Activated T-helper 2 cell treated with anti-CD3 and anti-CD28 coated beads, Interferon-gamma antibody, Interleukin-2, Interleukin-4, amounts not matched to agents 10 μg/mL and 5 μg/mL and 100 μg/mL, durations not matched to agents 14 hours and 24 hours and 36 hours (primary cell): ENCODE measurements at regions of chr12 and their contacts with region 1.

Region 1: DNA sequence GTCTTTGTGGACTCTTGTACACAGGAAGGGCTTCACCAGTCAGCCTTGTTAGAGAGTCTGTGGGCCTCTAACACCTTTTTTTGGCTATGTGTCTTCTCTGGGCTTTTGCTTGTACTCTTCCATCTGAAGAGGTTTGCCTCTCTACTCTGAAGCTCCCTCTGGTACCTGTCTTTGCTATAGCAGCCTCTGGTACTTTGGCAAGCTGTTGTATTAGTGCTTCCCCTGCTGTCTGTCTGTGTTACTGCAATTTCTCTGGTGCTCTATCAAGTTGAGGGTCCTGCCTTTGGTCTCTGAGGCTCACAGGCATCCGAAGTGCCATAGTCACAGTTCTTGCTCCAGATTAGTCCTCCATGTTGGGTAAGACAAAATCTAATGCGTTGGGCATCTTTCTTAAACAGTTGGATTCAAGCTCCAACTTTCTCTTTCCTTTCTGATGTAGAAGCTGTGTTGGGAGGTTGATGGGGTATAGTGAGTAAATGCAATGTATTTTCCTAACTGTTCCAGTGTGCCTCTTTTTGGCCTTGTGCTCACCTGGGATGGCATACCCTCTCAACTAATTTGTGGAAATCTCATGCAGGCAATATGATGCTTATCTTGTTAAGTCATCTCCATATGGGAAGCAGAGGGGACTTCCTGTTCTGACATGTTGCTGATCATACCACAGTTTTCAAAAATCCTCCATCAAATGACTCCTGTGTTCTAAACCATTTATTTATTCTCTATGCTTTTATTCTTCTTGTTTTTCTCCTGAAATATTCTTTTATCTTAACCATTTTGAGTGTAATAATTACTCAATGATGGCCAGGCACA is 88.8 kb downstream of the ATF7IP start:
- DNase-seq: peak; percentile 28
- H3K4me3 Mint-ChIP-seq: no peak overlapping the region
- H3K27ac Mint-ChIP-seq: peak overlapping the region; percentile 83
- H3K4me1 Mint-ChIP-seq: peaks cover 49% of the 10 kb centered on the region
- H3K27me3 Mint-ChIP-seq: no peaks in the 10 kb centered on the region

Region 2: GRCh38 chr12:14394317-14395073 is 59.8 kb before region 1 on chr12:
- intact Hi-C with region 1: loop called (anchors 5 kb)
- DNase-seq: peak; percentile 42
- H3K4me3 Mint-ChIP-seq: peak overlapping the region; percentile 89
- H3K27ac Mint-ChIP-seq: peak overlapping the region; percentile 92
- H3K4me1 Mint-ChIP-seq: peaks cover 67% of the 10 kb centered on the region
- H3K27me3 Mint-ChIP-seq: no peaks in the 10 kb centered on the region

Region 3: DNA sequence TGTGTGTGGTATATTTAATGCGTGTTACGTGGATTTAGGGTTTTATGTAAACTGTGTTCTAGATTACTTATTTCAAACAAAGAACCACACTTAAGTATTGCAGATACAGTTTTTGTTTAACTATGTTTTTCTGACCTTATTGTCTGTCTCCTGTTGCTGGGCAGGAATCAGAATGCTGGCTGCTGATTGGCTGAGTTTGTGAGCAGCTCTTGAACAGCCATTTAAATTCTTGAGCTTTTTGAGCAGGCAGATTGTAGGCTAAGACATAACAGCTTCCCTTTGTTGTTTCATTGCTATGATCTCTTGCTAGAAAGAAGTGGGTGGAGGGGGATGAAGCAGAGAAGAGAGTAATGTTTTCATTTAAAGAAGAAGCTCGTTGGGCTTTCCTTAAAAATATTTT is 36.6 kb before region 1 on chr12:
- intact Hi-C with region 1: loop called (anchors 5 kb)
- DNase-seq: peak; percentile 64
- H3K4me3 Mint-ChIP-seq: peak overlapping the region; percentile 77
- H3K27ac Mint-ChIP-seq: peak overlapping the region; percentile 92
- H3K4me1 Mint-ChIP-seq: peaks cover 42% of the 10 kb centered on the region
- H3K27me3 Mint-ChIP-seq: no peaks in the 10 kb centered on the region

Region 4: DNA sequence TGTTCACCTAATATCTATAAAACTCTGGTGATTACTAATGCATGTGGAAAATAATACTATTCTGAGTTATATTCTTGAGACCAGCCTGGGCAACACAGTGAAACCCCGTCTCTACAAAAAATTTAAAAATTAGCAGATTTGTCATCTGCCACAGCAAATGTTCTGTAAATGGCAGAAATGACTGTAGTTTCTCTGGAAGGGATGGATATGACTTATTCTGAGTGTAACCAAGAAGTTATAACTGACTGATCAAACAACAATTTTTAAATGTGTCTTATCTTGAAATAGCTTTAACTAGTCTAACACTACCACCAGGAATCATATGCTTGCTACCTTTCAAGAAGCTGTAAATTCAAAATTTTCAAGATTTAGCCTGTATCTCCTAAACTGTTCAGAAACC is 24.7 kb after region 1 on chr12:
- intact Hi-C with region 1: loop called (anchors 2 kb)
- DNase-seq: no peak
- H3K4me3 Mint-ChIP-seq: no peak overlapping the region
- H3K27ac Mint-ChIP-seq: peak overlapping the region; percentile 38
- H3K4me1 Mint-ChIP-seq: peaks cover 10% of the 10 kb centered on the region
- H3K27me3 Mint-ChIP-seq: no peaks in the 10 kb centered on the region

Region 5: DNA sequence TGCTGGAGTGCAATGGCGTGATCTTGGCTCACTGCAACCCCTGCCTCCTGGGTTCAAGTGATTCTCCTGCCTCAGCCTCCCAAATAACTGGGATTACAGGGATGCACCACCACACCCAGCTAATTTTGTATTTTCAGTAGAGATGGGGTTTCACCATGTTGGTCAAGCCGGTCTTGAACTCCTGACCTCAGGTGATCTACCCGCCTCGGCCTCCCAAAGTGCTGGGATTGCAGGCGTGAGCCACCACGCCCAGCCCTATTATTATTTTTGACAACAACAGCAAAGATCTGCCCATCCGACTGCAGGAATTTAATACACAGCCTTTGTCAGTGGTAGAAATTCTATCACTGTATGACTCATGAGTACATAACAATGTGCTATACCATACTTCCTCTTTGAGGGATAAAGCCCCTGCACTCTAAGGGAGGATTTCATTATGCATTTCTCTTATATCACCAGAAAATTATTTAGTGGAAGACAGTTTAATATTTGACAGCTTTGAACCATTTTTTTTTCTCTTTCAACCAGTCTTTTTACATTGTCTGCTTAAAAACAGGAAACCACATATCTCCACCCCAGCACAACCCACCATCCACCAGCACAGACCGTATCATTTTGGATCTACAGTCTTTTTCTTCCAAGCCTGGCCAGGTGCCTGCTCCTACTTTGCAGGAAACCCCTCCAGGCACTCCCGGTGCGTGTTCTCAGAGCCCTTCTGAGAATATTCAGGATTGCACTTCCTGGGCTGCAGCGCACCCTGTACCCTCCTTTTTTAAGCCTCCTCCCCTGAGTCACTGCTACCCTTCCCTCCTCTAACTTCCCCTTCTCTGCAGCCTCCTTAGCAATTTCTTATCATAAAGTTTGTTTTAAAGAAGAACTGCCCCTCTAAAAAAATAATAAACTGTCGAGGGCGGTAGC is 506.5 kb after region 1 on chr12:
- intact Hi-C with region 1: no loop called
- DNase-seq: peak; percentile 43
- H3K4me3 Mint-ChIP-seq: peak overlapping the region; percentile 96
- H3K27ac Mint-ChIP-seq: peak overlapping the region; percentile 97
- H3K4me1 Mint-ChIP-seq: peaks cover 58% of the 10 kb centered on the region
- H3K27me3 Mint-ChIP-seq: no peaks in the 10 kb centered on the region